ENCODE measurements at regions of chr6 and their contacts with region 1.

Region 1: GRCh38 chr6:42864602-42865001 is 14.8 kb upstream of the RPL7L1 start:
- DNase-seq: no peak
- H3K4me3 ChIP-seq: no peak overlapping the region
- H3K27ac ChIP-seq: no peak overlapping the region
- H3K27me3 ChIP-seq: no peaks in the 10 kb centered on the region
- CTCF ChIP-seq: no peak

Region 2: GRCh38 chr6:42661540-42662153 is 203.0 kb before region 1 on chr6:
- in situ Hi-C with region 1: loop called (anchors 25 kb)
- DNase-seq: peak; percentile 77
- H3K4me3 ChIP-seq: no peak overlapping the region
- H3K27ac ChIP-seq: no peak overlapping the region
- H3K27me3 ChIP-seq: no peaks in the 10 kb centered on the region
- CTCF ChIP-seq: peak; percentile 85